ENCODE measurements at regions of chr12 and their contacts with region 1.

Region 1: DNA sequence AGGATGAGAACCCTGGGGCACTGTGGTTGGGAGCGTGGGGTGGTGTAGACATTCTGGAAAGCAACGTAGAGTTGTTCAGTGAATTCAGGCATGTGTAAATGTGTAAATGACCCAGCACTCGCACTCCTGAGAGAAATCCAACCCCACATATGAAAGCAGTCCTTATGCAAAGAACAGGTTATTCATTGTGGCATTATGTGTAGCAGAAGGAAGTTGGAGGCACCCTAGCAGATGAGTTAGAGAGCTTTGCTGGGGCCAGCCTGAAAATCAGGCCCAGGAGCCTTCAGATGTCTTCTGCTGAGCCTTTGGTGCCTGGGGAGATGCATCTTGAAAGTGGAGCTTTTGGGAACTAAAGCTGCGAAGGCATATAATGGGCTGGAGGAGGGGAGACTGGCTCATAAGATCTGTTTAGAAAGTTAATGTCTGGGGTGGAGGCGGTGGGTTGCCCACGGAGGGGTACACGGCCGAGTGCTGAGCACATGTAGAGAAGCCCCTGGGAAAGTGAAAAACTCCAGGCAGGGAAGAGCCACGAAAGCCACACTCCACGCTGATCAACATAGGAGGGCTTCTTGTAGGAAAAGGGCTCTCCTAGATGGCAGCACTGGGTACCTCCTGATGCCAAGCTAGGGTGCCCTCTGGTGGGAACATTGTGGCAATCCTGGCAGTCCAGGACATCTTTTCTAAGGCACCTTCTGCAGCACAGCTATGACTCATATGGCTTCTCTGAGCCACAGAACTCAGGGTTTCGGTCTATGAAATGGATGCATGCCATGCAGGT is 6.0 kb upstream of the KRT83 start:
- DNase-seq: peak; percentile 96
- ATAC-seq: peak; percentile 97
- H3K4me3 ChIP-seq: no peak overlapping the region
- H3K27ac ChIP-seq: peak overlapping the region; percentile 5
- H3K4me1 ChIP-seq: peaks cover 7% of the 10 kb centered on the region
- H3K27me3 ChIP-seq: no peaks in the 10 kb centered on the region
- CTCF ChIP-seq: peak; percentile 97

Region 2: DNA sequence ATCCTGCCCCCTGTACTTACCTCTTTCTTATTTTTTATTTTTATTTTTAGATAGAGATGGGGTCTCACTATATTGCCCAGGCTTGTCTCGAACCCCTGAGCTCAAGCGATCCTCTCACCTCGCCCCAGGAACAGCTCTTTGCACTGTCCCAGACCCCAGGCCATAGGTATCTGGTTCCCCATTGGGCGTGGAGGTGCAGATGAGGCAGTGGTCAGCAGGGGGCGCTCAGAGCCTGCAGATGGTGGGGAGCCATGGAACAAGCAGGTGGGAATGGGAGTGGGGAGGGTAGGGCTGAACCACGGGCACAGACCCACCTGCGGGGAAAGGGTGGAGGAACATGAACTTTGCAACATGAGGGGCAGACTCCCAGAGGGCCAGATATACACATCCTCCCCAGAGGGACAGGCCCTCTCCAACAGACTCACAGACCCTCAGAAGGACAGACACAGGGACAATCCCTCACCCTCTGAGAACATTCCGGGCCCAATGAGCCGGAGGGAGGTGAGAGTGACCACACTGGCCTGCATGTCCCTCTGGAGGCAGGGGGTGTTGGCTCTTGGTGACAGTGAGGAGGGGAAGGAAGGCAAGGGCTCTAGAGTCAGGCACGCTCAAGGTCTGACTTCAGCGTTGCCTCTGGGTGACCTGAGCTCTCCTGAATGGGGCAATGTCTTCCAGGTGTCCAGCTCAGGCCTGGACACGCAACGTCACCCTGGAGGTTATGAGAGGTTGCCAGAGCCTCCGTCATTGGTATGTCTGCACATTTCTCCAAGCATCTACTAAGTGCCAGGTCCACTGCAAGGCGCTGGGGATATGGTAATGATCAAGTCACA is 170.3 kb before region 1 on chr12:
- CTCF ChIA-PET with region 1: interaction called, 15 read pairs
- POLR2A ChIA-PET with region 1: no interaction called
- in situ Hi-C with region 1: no loop called
- intact Hi-C with region 1: loop called (anchors 2 kb)
- DNase-seq: no peak
- ATAC-seq: peak; percentile 82
- H3K4me3 ChIP-seq: no peak overlapping the region
- H3K27ac ChIP-seq: peak overlapping the region; percentile 18; the same call in 1 of the 2 replicates
- H3K4me1 ChIP-seq: peaks cover 15% of the 10 kb centered on the region
- H3K27me3 ChIP-seq: no peaks in the 10 kb centered on the region
- CTCF ChIP-seq: peak; percentile 95

Region 3: DNA sequence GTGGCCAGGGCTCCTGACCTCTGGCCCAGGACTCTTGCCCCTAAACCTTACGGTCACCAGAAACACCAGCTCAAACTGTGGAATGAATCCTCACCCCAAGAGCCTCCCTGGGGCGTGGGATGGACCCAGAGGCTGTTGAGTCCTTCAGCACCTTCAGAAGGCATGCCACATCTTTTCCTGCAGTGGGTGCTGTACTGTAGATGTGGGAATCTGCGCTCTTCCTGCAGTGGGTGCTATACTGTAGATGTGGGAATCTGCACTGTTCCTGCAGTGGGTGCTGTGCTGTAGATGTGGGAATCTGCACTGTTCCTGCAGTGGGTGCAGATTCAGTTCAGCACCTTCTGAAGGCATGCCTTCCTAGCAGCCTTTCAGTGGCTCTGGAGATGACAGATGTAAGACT is 77.7 kb after region 1 on chr12:
- CTCF ChIA-PET with region 1: no interaction called
- POLR2A ChIA-PET with region 1: no interaction called
- in situ Hi-C with region 1: no loop called
- intact Hi-C with region 1: no loop called
- DNase-seq: no peak
- ATAC-seq: no peak
- H3K4me3 ChIP-seq: no peak overlapping the region
- H3K27ac ChIP-seq: no peak overlapping the region
- H3K4me1 ChIP-seq: no peaks in the 10 kb centered on the region
- H3K27me3 ChIP-seq: no peaks in the 10 kb centered on the region
- CTCF ChIP-seq: no peak

Region 4: DNA sequence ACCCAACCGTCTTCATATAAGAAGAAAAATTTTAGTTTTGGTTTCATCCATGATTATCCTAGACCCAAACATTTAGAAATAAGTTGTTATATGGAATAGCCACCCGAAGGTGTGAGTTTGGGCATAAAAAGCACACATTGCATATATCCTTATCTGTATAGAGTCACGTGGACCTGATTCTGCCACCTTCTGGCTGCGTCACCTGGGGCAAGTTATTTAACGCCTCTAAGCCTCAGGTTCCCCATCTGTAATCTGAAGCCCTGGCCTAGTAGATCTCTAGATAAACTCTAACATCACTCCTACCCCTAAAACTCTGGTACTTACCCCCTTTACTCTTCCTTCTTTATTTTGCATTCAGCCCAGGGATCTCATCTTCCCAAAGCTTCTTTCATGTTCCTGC is 207.2 kb after region 1 on chr12:
- CTCF ChIA-PET with region 1: no interaction called
- POLR2A ChIA-PET with region 1: no interaction called
- in situ Hi-C with region 1: no loop called
- intact Hi-C with region 1: no loop called
- DNase-seq: no peak
- ATAC-seq: no peak
- H3K4me3 ChIP-seq: no peak overlapping the region
- H3K27ac ChIP-seq: no peak overlapping the region
- H3K4me1 ChIP-seq: peaks cover 10% of the 10 kb centered on the region
- H3K27me3 ChIP-seq: no peaks in the 10 kb centered on the region
- CTCF ChIP-seq: no peak

Measured in Panc1 (cell line).